ENCODE measurements at regions of chr16 and their contacts with region 1.

Region 1: DNA sequence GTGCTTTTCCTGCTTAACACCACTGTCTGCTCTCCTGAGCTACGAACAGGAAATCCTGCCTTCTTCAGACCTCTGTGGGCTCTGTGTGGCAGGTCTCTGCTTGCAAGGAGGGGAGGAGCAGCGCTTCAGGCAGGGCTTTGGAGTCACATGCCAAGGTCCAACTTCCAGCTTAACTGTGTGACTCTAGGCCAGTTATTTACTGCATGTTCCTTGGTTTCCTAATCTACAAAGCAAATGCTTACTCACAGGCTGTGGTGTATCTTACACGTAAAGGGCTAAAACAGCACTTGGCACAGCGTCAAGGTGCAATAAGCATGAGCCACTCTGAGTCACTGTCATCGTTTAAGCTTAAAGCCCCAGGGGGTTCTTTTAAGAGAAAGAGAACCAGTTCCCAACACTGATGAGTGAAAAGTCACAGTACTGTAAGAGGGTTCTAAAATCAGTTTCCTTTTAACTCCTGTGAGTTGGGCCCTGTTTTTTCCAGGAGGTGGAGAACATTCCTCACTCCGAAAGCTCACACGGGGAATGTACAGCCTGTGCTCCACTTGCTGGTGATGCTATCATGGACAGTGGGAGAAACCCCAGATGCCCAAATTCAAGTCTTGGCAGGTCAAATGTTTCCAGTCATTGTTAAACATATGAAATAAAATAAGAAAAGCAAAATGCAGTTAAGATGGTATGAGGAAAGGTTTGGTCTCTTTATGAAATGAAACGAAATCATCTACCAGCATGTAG is 54.1 kb upstream of the BCAR1 start:
- DNase-seq: peak; percentile 100
- H3K4me3 ChIP-seq: peak overlapping the region in 2 of 3 experiments; percentile 8 to 10
- H3K27ac ChIP-seq: peak overlapping the region; percentile 96
- H3K4me1 ChIP-seq: peaks cover 35% of the 10 kb centered on the region
- H3K27me3 ChIP-seq: no peaks in the 10 kb centered on the region
- CTCF ChIP-seq: peak in 1 of 2 donors; percentile 33

Region 2: GRCh38 chr16:75206749-75207451 is 98.6 kb before region 1 on chr16 and contains the start of gene CTRB2:
- CTCF ChIA-PET with region 1: no interaction called
- dilution Hi-C with region 1: no loop called
- in situ Hi-C with region 1: no loop called
- intact Hi-C with region 1: no loop called
- DNase-seq: no peak
- H3K4me3 ChIP-seq: no peak within 1 kb of the TSS
- H3K27ac ChIP-seq: no peak within 1 kb of the TSS
- H3K4me1 ChIP-seq: no peaks in the 10 kb centered on the region
- H3K27me3 ChIP-seq: no peaks in the 10 kb centered on the region
- CTCF ChIP-seq: no peak
- total RNA-seq, gene CTRB2: not detected

Region 3: GRCh38 chr16:75244844-75245758 is 60.4 kb before region 1 on chr16:
- CTCF ChIA-PET with region 1: interaction called, 4 read pairs
- dilution Hi-C with region 1: loop called (anchors 5 kb)
- in situ Hi-C with region 1: no loop called
- intact Hi-C with region 1: loop called (anchors 1 kb)
- DNase-seq: peak; percentile 94
- H3K4me3 ChIP-seq: peak overlapping the region in 1 of 3 experiments; percentile 11
- H3K27ac ChIP-seq: peak overlapping the region; percentile 88
- H3K4me1 ChIP-seq: peaks cover 84% of the 10 kb centered on the region
- H3K27me3 ChIP-seq: no peaks in the 10 kb centered on the region
- CTCF ChIP-seq: no peak

Region 4: DNA sequence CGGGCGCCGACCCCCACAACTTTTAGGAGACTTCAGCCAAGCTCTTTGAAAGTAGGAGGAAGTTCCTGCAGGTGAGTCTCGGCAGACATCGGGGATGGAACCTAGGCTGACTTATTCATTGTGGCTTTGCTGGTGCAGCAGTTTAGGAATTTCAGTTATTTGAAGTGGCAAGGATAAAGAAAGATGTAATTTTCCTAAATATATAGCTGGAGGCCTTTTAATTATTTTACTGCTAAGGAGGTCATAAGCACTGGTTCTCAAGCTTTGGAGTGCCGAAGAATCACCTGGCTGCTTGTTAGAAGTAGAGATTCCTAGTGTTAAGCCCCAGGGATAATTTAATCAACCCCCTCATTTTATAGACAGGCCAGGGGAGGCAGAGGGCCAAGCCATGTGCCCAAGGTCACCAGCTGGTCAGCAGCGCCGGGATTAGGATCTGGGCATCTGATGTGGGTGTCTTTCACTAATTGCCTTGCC is 25.2 kb before region 1 on chr16:
- CTCF ChIA-PET with region 1: no interaction called
- dilution Hi-C with region 1: no loop called
- in situ Hi-C with region 1: no loop called
- intact Hi-C with region 1: loop called (anchors 2 kb)
- DNase-seq: peak; percentile 48
- H3K4me3 ChIP-seq: no peak overlapping the region
- H3K27ac ChIP-seq: no peak overlapping the region
- H3K4me1 ChIP-seq: peaks cover 39% of the 10 kb centered on the region
- H3K27me3 ChIP-seq: no peaks in the 10 kb centered on the region
- CTCF ChIP-seq: no peak

Region 5: DNA sequence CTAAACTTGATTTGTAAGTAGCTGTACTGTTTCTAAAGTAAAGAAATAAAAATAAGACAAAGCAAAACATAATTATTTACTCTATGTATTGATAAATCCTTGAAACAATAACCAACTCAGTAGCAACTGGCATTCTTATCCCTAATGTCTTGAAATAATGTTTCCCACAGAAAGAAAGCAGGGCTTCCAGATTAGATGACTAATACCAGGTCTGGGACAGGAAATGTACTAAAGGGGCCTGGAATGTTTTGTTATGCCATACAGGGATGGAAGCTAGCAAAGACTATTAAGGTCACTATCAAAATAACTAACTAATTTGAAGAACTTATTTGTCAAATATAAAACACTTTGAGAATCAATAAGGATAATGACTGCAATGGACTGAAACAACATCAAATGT is 45.7 kb after region 1 on chr16:
- CTCF ChIA-PET with region 1: no interaction called
- dilution Hi-C with region 1: no loop called
- in situ Hi-C with region 1: no loop called
- intact Hi-C with region 1: loop called (anchors 2 kb)
- DNase-seq: peak; percentile 59
- H3K4me3 ChIP-seq: no peak overlapping the region
- H3K27ac ChIP-seq: peak overlapping the region; percentile 40
- H3K4me1 ChIP-seq: peaks cover 11% of the 10 kb centered on the region
- H3K27me3 ChIP-seq: no peaks in the 10 kb centered on the region
- CTCF ChIP-seq: no peak

Region 6: GRCh38 chr16:75385507-75386152 is 80.1 kb after region 1 on chr16:
- CTCF ChIA-PET with region 1: interaction called, 3 read pairs
- dilution Hi-C with region 1: no loop called
- in situ Hi-C with region 1: no loop called
- intact Hi-C with region 1: loop called (anchors 1 kb)
- DNase-seq: peak; percentile 59
- H3K4me3 ChIP-seq: no peak overlapping the region
- H3K27ac ChIP-seq: peak overlapping the region; percentile 60
- H3K4me1 ChIP-seq: peaks cover 16% of the 10 kb centered on the region
- H3K27me3 ChIP-seq: no peaks in the 10 kb centered on the region
- CTCF ChIP-seq: peak; percentile 46 to 50

Region 7: GRCh38 chr16:75420987-75421819 is 115.7 kb after region 1 on chr16:
- CTCF ChIA-PET with region 1: no interaction called
- dilution Hi-C with region 1: no loop called
- in situ Hi-C with region 1: no loop called
- intact Hi-C with region 1: no loop called
- DNase-seq: peak; percentile 49
- H3K4me3 ChIP-seq: peak overlapping the region; percentile 20 to 36 (median 25)
- H3K27ac ChIP-seq: no peak overlapping the region
- H3K4me1 ChIP-seq: peaks cover 9% of the 10 kb centered on the region
- H3K27me3 ChIP-seq: no peaks in the 10 kb centered on the region
- CTCF ChIP-seq: no peak

Measured in mammary epithelial cell (primary cell).